Mammary epithelial cell (primary cell): ENCODE measurements at regions of chr5 and their contacts with region 1.

Region 1: DNA sequence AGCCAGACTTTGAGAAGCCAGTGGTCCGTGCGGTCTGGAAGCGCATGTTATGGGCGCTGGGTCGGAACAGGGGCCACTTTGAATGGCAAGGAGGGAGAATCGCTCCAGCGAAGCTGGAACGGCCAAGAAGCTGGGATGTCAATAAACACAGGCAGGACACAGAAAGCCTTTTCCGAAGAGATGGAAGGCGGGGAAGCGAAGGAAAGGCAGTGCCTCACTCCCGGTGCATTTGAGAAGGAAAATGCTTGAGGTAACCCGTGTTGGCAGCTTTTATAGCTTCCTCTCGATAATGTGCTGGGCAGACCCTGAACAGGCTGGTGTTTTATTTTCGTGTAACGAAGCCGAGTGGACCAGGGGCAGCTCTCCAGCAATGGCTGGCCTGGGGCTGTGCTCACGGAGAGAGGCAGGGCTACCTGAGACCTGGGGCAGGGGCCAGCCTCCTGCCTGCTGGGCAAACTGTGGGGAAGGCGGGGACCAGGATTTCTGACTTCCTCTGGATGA is 84.2 kb upstream of the SPRY4 start:
- DNase-seq: no peak
- H3K4me3 ChIP-seq: no peak overlapping the region
- H3K27ac ChIP-seq: no peak overlapping the region
- H3K4me1 ChIP-seq: peaks cover 8% of the 10 kb centered on the region
- H3K27me3 ChIP-seq: no peaks in the 10 kb centered on the region
- CTCF ChIP-seq: no peak

Region 2: DNA sequence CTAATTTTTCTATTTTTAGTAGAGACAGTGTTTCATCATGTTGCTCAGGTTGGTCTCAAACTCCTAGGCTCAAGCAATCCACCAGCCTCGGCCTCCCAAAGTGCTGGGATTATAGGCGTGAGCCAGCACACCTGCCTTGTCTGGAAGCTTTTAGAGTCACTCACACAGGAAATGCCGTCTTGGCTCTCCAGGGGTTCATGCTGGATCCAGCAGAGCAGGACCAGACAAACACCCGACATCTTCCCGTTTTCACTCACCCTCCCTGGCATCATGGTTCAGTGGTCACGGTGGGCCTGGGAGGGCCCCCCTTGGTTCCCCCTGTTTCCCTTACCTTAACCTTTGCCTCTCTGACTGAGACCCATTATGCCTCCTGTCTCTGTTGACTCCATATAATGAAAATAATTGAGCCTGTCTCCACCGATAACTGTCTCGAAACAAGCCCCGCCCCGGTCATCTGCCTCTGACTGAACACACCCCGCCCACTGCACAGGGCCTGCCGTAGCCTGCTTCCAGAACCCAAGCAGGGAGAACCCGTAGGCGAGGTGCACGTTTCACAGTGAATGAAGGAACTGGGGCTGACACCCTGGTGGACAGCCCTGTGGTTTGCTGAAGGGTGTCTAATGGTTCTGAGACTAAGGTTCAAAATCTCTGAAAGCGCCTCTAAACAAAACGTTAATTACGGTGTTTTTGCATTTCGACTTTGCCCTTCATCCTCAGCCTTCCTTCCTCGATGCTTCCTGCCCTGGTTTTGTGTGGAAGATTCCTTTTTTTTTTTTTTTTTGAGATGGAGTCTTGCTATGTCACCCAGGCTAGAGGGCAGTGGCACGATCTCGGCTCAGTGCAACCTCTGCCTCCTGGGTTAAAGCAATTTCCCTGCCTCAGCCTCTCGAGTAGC is 44.5 kb before region 1 on chr5:
- CTCF ChIA-PET with region 1: no interaction called
- dilution Hi-C with region 1: loop called (anchors 5 kb)
- in situ Hi-C with region 1: no loop called
- intact Hi-C with region 1: no loop called
- DNase-seq: peak; percentile 88
- H3K4me3 ChIP-seq: peak overlapping the region; percentile 43 to 45 (median 44)
- H3K27ac ChIP-seq: peak overlapping the region; percentile 80
- H3K4me1 ChIP-seq: peaks cover 28% of the 10 kb centered on the region
- H3K27me3 ChIP-seq: no peaks in the 10 kb centered on the region
- CTCF ChIP-seq: peak in 1 of 2 donors; percentile 40

Region 3: DNA sequence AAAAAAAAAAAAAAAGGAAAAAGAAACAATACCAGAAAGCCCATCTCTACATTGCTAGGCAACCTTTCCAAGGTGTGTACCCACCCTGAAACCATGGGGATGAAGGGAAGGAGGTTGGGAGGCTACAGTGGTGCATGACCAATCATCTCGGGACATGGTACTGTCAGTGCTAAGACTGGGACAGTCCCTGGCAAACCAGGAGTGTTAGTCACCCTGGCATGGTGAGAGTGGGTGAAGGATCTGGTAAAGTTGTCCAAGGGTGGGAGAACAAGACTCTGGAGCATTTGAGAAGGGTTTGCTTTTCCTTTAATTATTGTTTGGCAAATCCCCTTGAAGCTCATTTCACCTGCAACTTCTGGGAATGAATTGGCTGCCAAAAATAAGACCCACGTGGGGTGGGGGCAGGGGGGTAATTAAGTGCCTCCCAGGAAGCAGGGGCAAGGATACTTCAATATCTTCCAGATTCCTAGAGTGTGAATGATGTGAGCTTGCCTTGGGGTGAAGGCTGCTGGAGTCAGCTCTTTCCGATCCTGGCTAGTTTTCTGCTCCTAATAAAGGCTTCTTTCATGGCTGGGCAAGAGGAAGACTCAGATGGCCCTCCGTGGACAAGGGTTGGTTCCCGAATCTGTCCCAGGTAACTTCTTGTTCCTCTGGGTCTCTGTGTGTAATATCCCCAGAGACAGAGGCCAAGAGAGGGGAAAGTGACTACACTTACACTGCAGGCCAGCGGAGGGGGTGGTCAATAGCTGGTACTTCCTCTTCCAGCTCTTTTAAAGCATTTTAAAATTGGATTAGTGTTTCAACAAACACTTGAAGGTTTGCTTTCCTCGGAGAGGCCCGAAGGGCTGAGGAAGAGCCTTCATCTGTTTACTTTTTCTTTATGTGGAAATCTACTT is 22.6 kb before region 1 on chr5:
- CTCF ChIA-PET with region 1: interaction called, 13 read pairs
- dilution Hi-C with region 1: no loop called
- in situ Hi-C with region 1: no loop called
- intact Hi-C with region 1: no loop called
- DNase-seq: peak; percentile 51
- H3K4me3 ChIP-seq: no peak overlapping the region
- H3K27ac ChIP-seq: no peak overlapping the region
- H3K4me1 ChIP-seq: no peaks in the 10 kb centered on the region
- H3K27me3 ChIP-seq: no peaks in the 10 kb centered on the region
- CTCF ChIP-seq: no peak